ENCODE measurements at regions of chr22 and their contacts with region 1.

Region 1: DNA sequence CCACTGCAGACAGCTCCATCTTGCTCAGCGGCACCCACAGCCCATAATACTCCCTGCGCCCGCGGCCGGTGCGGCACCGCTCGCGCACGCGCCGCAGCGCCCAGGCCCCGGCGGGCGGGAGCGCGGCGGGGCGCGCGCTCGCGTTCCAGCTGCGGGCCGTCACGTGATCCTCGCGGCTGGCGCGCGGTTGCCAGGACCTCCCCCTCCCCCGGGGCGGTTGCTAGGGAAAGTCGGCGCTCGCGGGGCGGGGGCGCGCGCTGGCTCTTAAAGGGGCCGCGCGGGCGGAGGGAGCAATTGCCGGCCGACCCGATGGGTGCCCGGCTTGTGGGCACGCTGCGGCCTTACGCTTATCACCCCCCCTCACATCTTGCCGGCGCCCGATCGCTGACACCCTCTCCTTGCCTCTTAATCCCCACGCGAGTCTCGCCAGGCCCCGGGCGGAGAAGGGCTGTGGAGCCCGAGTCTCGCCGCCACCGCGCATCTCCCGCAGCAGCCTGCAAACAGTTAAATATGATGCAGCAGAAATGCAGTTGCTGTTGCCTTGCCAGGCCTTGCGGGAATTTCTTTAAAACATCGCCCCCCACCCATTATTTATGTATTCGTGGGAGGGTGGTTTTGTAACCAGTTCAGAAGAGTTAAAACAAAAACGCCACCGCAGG is at the start of gene CBX6:
- DNase-seq: peak; percentile 98
- H3K4me3 ChIP-seq: peak within 1 kb of the TSS; percentile 79
- H3K27ac ChIP-seq: peak within 1 kb of the TSS; percentile 42
- H3K4me1 ChIP-seq: peaks cover 6% of the 10 kb centered on the region
- H3K27me3 ChIP-seq: no peaks in the 10 kb centered on the region
- total RNA-seq, gene CBX6: 52.1 and 52.7 TPM in 2 replicates

Region 2: GRCh38 chr22:38957046-38957759 is 84.9 kb after region 1 on chr22 and contains the start of gene APOBEC3A:
- in situ Hi-C with region 1: no loop called
- DNase-seq: no peak
- H3K4me3 ChIP-seq: no peak within 1 kb of the TSS
- H3K27ac ChIP-seq: no peak within 1 kb of the TSS
- H3K4me1 ChIP-seq: no peaks in the 10 kb centered on the region
- H3K27me3 ChIP-seq: peaks cover 26% of the 10 kb centered on the region
- total RNA-seq, gene APOBEC3A: not detected in 2 replicates

Region 3: GRCh38 chr22:39003165-39003638 is 130.9 kb after region 1 on chr22:
- in situ Hi-C with region 1: loop called (anchors 10 kb)
- DNase-seq: peak; percentile 88
- H3K4me3 ChIP-seq: no peak overlapping the region
- H3K27ac ChIP-seq: no peak overlapping the region
- H3K4me1 ChIP-seq: no peaks in the 10 kb centered on the region
- H3K27me3 ChIP-seq: peaks cover under 1% of the 10 kb centered on the region; the same call in 1 of the 2 replicates

Region 4: GRCh38 chr22:39117585-39118191 is 245.4 kb after region 1 on chr22:
- in situ Hi-C with region 1: loop called (anchors 10 kb)
- DNase-seq: peak; percentile 53
- H3K4me3 ChIP-seq: no peak overlapping the region
- H3K27ac ChIP-seq: no peak overlapping the region
- H3K4me1 ChIP-seq: no peaks in the 10 kb centered on the region
- H3K27me3 ChIP-seq: peaks cover 22% of the 10 kb centered on the region

Measured in GM23248 (cell line).